ENCODE measurements at regions of chr3 and their contacts with region 1.

Region 1: GRCh38 chr3:11643605-11644087 is at the start of gene VGLL4:
- DNase-seq: peak; percentile 66
- ATAC-seq: peak; percentile 68
- H3K4me3 Mint-ChIP-seq: peak within 1 kb of the TSS; percentile 99
- H3K27ac Mint-ChIP-seq: peak within 1 kb of the TSS; percentile 96
- H3K4me1 Mint-ChIP-seq: peaks cover 23% of the 10 kb centered on the region
- H3K27me3 Mint-ChIP-seq: no peaks in the 10 kb centered on the region
- CTCF ChIP-seq: no peak
- total RNA-seq, gene VGLL4: 19.2 and 19.3 TPM in 2 replicates

Region 2: GRCh38 chr3:11140054-11140712 is 503.5 kb before region 1 on chr3:
- CTCF ChIA-PET with region 1: no interaction called
- POLR2A ChIA-PET with region 1: no interaction called
- intact Hi-C with region 1: loop called (anchors 1 kb)
- DNase-seq: peak; percentile 56
- ATAC-seq: peak; percentile 99
- H3K4me3 Mint-ChIP-seq: peak overlapping the region; percentile 39
- H3K27ac Mint-ChIP-seq: peak overlapping the region; percentile 57
- H3K4me1 Mint-ChIP-seq: peaks cover 34% of the 10 kb centered on the region
- H3K27me3 Mint-ChIP-seq: no peaks in the 10 kb centered on the region
- CTCF ChIP-seq: no peak

Region 3: DNA sequence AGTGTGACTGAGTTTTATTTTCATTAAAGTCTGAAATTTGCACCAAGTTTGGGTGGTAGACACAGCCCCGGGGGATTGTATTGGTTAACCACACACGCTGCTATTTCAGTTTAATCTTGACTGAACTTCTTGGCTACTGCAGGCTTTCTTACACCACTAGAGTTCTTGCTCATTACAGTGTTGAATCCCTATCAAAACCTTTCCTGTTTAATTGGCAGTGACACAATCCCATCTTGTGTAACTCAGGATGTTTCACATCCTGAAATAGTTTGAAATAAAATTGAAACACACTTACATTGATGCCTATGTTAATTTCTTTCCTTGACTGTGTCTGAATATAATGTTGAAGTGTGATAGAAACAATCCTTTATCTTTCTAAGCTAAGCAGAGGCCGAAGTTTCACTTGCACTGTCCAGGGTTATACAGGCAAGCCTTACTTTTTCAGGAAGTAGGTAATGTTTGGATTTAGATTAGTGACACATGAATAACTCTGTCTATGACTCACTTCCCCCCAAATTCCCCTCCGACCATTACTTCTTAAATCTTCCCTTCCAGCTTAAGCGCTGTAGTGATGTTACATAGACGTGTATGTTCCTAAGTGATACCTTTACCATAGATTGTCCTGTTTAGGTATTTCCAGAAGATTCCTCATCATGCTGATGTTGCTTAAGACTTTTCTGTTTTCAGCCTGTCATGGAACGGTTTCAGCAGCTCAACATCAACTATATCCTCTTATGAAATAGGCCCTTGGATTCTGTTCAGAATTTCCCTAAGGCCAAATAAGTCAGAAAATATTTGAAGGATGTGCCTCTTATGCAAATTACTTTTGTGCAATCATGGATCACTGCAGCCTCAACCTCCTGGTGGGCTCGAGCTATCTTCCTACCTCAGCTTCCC is 354.6 kb before region 1 on chr3:
- CTCF ChIA-PET with region 1: no interaction called
- POLR2A ChIA-PET with region 1: interaction called, 6 read pairs
- intact Hi-C with region 1: loop called (anchors 2 kb)
- DNase-seq: no peak
- ATAC-seq: peak; percentile 82
- H3K4me3 Mint-ChIP-seq: peak overlapping the region; percentile 81
- H3K27ac Mint-ChIP-seq: peak overlapping the region; percentile 99
- H3K4me1 Mint-ChIP-seq: peaks cover 57% of the 10 kb centered on the region
- H3K27me3 Mint-ChIP-seq: no peaks in the 10 kb centered on the region
- CTCF ChIP-seq: no peak

Region 4: DNA sequence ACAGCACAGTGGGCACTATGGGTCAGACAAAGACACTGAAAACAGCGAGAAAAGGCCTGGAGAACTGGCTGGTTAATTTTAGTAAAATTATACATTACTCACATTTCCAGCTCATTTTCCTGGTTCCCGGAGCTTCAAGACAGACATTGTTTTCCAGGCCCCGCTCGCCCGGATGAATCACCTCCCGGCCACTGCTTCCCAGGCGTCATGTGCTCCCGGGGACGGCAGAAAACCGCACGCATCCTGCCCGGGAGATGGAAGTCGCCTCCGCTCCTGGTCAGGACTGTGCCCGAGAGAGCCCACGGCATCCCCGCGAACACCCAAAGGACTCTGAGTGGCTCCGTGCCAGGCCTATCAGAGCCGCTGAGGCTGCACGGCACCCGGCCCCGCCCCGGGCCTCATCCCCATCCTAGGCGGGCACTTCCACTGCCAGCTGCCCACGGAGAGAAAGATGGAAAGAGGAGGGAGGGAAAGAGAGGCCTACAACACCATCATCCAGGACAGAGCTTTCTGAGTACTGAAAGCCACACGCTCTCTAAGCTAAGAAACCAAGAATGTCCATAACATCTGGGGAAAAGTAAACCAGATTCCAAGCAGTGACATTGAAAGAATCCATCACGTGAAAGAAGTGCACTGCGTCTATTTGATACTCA is 75.0 kb before region 1 on chr3:
- CTCF ChIA-PET with region 1: no interaction called
- POLR2A ChIA-PET with region 1: no interaction called
- intact Hi-C with region 1: loop called (anchors 5 kb)
- DNase-seq: no peak
- ATAC-seq: no peak
- H3K4me3 Mint-ChIP-seq: no peak overlapping the region
- H3K27ac Mint-ChIP-seq: no peak overlapping the region
- H3K4me1 Mint-ChIP-seq: no peaks in the 10 kb centered on the region
- H3K27me3 Mint-ChIP-seq: no peaks in the 10 kb centered on the region
- CTCF ChIP-seq: no peak

Region 5: DNA sequence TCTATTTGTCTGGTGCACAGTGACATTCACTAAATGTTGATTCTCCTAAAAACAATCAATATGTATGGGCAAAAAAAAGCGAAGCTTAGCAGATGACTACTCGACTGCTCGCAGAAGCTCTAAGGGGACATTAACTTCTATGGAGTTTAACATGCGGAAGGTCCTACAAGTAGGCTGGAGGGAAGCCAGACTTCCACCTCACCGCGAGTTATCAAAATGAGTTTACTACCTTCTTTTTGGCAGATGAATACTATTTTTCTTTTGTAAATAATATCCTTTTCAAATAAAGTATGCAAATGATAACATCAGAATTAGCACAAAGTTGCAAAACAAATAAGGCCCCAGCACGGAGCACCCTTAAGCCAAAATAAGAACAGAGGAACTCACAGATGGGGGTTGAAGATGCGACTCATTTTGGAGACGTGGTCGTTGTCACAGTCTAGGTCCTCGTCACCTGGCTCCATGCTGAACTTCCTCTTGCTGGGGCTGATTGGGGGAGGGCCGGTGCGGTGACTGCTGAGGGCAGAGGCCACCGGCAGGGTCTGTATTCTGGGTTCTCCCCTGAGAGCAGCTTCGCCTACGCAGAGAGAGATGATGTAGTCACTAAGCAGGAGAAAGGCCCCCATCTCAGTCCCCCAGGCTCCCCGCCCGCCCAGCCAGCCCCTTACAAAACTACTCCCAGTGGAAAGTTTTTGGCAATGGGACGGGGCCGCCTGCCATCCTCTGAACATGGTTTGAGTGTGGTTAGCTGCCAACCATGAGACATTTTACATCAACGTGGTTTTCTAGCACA is 42.0 kb before region 1 on chr3:
- CTCF ChIA-PET with region 1: no interaction called
- POLR2A ChIA-PET with region 1: no interaction called
- intact Hi-C with region 1: loop called (anchors 1 kb)
- DNase-seq: peak; percentile 68
- ATAC-seq: peak; percentile 100
- H3K4me3 Mint-ChIP-seq: peak overlapping the region; percentile 80
- H3K27ac Mint-ChIP-seq: peak overlapping the region; percentile 91
- H3K4me1 Mint-ChIP-seq: peaks cover 47% of the 10 kb centered on the region
- H3K27me3 Mint-ChIP-seq: no peaks in the 10 kb centered on the region
- CTCF ChIP-seq: no peak

Region 6: DNA sequence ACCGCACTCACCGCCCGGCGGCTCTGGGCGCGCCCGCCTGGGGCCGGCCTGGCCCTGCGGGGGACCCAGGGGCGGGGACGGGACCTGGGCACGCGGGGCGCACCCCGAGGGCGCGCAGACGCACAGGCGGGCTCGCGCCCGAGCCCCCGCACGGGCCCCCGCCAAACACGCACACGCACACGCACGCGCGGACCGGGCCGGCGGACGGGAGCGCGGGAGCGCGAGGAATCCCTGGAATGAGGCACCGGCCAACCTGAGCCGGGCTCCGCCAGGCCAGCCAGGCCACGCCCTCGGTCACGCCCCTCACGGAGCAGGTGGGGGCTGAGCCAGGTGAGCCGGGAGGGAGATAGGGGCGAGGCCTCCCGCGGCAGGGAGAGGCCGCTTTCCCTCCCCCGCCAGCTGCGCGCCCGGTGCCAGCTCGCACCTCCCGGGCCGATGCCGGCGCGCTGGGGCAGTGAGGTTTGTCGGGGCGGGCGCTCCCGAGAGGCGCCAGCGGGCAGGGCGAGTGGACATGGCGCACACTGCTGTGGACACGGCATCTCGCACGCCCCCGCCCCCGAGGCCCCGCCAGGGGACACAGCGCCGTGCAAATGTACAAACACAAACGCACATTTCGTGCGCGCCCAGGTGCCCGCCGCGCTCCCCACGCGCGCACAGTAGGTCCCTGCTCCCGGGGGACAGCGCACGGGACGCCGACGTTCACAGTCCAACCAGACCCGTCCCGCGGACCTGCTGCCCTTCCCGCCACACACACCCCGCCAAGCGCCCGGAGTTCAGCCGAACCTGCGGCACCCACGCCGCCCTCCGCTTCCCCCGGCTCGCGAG is 76.0 kb after region 1 on chr3:
- CTCF ChIA-PET with region 1: no interaction called
- POLR2A ChIA-PET with region 1: no interaction called
- intact Hi-C with region 1: loop called (anchors 2 kb)
- DNase-seq: peak; percentile 76
- ATAC-seq: peak; percentile 69
- H3K4me3 Mint-ChIP-seq: peak overlapping the region; percentile 94
- H3K27ac Mint-ChIP-seq: no peak overlapping the region
- H3K4me1 Mint-ChIP-seq: peaks cover 21% of the 10 kb centered on the region
- H3K27me3 Mint-ChIP-seq: no peaks in the 10 kb centered on the region
- CTCF ChIP-seq: no peak

Region 7: DNA sequence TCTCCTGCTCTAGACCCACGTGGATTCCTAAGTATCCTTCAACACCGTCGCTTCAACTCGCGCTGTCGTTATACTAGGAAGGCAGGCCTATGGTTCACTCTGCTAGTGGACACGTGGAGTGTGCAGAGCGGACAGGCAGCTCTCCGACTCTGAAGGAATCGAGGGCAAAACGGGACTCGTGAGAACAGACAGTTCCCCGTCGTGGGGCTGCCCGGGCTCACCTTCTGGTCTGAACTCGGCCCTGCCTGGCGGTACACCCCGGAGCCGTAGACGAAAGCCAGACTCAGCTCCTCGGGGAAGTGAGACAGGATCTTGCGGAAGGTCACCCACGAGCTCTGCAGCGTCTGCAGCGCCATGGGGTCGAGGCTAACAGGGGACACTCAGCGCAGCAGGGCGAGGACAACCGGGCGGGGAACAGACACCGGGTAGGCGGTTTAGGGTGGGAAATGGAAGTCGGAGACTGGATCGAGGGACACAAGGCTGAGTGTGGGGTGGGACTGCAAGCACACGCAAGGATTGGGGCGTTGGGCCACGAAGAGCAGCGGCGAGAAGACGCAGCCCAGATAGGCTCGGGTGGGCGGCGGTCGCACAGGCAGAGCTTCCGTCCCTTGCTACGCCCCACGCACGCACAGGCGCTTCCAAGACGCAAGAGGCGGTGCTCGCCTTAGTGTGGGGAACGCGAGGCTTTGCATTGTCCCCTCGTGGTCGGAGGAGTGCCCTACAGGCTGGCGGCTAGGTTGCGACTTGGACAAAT is 202.8 kb after region 1 on chr3 and contains the start of gene TAMM41:
- CTCF ChIA-PET with region 1: no interaction called
- POLR2A ChIA-PET with region 1: interaction called, 10 read pairs
- intact Hi-C with region 1: loop called (anchors 2 kb)
- DNase-seq: peak; percentile 77
- ATAC-seq: peak; percentile 100
- H3K4me3 Mint-ChIP-seq: peak within 1 kb of the TSS; percentile 99
- H3K27ac Mint-ChIP-seq: peak within 1 kb of the TSS; percentile 95
- H3K4me1 Mint-ChIP-seq: peaks cover 37% of the 10 kb centered on the region
- H3K27me3 Mint-ChIP-seq: no peaks in the 10 kb centered on the region
- CTCF ChIP-seq: no peak
- total RNA-seq, gene TAMM41: 28.1 and 39.0 TPM in 2 replicates

Measured in activated B cell treated with CpG ODN at 0.5 μM for 24 hours (primary cell).